PC-3 (cell line): ENCODE measurements at regions of chr17 and their contacts with region 1.

Region 1: DNA sequence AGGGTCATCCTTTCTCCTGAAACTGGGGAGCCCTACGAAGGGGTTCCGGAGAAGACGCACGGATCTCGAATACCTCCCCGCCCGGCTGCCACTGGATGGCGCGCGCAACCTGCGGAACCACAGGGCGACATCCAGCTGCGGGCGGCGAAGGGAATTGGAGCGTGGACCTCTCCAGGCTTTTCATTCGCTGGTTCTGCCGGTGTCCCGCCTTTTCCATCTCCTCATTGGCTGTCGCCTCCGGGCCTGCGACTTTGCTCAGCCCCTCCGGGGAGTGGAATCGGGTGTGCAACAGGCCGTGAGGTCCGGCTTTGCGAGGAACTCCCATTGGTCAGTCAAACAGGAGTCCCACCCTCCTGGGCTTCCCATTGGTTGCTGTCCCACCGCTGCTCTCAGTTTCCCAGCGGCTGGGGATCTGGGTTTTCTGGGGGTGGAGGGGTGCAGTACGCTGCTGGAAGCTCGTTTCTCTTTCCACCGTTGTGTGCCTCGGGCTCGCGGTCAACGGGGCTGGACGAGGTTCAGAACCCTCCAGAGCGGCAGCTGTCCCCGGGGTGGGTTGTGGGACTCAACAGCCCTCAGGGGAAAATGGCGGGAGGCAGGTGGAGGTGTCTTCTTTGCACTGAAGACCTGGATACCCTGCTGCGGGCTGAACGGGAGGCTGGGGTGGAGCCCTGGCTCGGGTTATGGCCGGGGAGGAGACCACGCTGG is 14.5 kb downstream of the OR1D5 start:
- DNase-seq: peak; percentile 97
- ATAC-seq: peak; percentile 98
- H3K4me3 ChIP-seq: peak overlapping the region; percentile 79
- H3K27ac ChIP-seq: no peak overlapping the region
- H3K4me1 ChIP-seq: peaks cover 10% of the 10 kb centered on the region; the same call in 1 of the 2 replicates
- H3K27me3 ChIP-seq: no peaks in the 10 kb centered on the region
- CTCF ChIP-seq: peak; percentile 82

Region 2: GRCh38 chr17:2940352-2940751 is 108.6 kb before region 1 on chr17:
- CTCF ChIA-PET with region 1: no interaction called
- POLR2A ChIA-PET with region 1: no interaction called
- intact Hi-C with region 1: no loop called
- DNase-seq: no peak
- ATAC-seq: no peak
- H3K4me3 ChIP-seq: no peak overlapping the region
- H3K27ac ChIP-seq: no peak overlapping the region
- H3K4me1 ChIP-seq: 0 out of 2 replicates have a peak, but pooled peaks cover 4% of the 10 kb centered on the region
- H3K27me3 ChIP-seq: no peaks in the 10 kb centered on the region
- CTCF ChIP-seq: no peak

Region 3: DNA sequence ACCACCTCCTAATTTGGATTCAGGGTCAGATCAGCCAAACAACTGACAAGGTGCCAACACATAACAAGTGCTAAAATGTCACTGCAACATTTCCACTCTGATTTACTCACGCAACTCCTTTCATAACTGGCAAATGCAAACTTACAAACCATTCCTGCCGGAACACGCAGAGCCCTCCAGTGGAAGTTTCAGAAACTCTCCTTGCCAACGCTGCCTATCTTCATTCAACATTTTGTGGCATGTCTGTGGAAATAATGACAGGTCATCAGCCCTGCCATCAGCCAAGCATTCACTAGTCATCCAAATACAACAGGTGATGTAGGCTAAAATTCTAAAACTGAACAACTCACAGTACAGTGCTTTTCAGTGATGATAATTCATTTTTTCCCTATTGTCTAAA is 287.0 kb after region 1 on chr17:
- CTCF ChIA-PET with region 1: no interaction called
- POLR2A ChIA-PET with region 1: no interaction called
- intact Hi-C with region 1: loop called (anchors 5 kb)
- DNase-seq: peak; percentile 47
- ATAC-seq: no peak
- H3K4me3 ChIP-seq: no peak overlapping the region
- H3K27ac ChIP-seq: no peak overlapping the region
- H3K4me1 ChIP-seq: no peaks in the 10 kb centered on the region
- H3K27me3 ChIP-seq: peaks cover 7% of the 10 kb centered on the region; the same call in 1 of the 2 replicates
- CTCF ChIP-seq: peak; percentile 53

Region 4: DNA sequence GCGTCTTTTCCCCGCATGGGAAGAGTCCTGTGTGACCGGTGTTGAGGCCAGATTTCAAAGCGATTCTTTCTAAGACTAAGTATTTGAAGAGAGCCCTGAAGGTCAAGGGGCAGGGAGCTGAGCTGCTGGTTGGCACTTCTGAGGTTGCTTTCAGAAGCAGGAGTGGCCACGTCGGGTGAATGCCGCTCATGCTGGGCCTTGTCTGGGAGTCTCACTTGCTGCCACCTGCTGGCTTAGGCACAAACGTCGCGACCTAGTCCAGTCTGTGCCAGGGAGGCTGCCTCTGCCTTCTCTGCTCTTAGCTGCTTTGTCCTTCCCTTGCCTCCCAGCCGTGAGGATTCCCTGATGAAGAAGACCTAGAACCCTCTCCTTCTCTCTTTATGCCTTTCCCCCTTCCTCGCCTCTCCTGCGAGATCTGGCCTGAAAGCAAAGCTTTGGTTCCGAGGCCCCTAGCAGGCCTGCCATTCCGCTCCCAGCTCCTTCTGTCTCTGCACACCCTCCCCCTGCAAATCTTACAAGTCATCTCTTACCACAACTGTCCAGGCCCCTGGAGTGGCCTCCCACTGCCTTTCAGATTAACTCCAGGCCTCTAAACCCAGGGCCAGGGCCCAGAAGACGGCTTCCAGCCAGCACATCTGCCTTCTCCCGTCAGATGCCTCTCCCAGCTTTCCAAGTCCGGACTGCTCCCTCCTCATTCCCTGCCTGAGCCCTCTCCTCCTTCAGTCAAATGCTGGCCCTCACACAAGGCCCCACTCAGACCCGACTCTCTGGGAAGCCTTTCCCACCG is 599.0 kb after region 1 on chr17:
- CTCF ChIA-PET with region 1: no interaction called
- POLR2A ChIA-PET with region 1: no interaction called
- intact Hi-C with region 1: loop called (anchors 5 kb)
- DNase-seq: peak; percentile 58
- ATAC-seq: peak; percentile 81
- H3K4me3 ChIP-seq: no peak overlapping the region
- H3K27ac ChIP-seq: no peak overlapping the region
- H3K4me1 ChIP-seq: no peaks in the 10 kb centered on the region
- H3K27me3 ChIP-seq: no peaks in the 10 kb centered on the region
- CTCF ChIP-seq: peak; percentile 62